Activated naive CD4-positive, alpha-beta T cell treated with anti-CD3 and anti-CD28 coated beads for 36 hours (primary cell): ENCODE measurements at regions of chr2 and their contacts with region 1.

Region 1: DNA sequence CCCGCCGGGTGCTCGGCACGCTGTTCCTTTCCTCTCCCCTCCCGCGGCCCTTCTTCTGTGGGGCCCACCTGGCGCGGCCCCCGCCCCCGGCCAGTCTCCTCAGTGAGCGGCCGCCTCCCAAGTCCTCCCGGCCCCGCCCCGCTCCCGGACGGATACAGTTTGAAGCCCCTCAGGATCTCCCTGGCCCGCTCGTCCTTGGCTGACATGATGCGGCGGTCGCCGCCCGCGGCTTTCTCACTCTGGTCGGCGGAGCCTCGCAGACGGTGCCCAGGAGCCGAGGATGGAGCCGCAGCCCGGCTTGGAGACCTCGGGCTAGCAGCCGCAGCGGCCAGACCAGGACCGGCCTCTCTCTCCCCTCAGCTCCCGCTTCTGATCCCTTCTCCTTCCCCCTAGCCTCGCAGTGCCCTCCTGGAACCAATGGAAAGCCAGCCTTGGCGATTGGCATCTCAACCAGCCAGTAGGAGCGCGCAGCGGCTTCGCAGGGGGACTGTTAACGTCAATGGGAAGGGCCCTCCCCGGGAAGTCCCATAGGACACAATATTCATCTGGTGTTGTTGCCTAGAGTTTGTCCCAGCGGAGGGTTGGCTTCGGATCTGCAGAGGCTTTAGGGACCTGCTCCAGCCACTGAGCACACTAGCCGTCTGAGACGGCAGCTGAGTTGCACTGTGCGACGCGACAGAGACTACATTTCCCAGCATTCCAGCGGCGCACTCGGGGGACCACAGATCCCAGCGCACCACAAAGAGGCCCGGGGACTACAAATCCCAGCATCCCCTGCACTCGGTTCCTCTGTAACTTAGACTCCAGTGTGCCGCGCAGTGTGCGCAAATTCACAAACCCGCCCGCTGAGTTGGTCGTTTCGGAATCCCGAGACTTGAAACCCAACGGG is at the start of gene PDE6D:
- DNase-seq: peak; percentile 98
- H3K4me3 Mint-ChIP-seq: peak within 1 kb of the TSS; percentile 92
- H3K27ac Mint-ChIP-seq: peak within 1 kb of the TSS; percentile 96
- H3K4me1 Mint-ChIP-seq: peaks cover 47% of the 10 kb centered on the region
- H3K27me3 Mint-ChIP-seq: no peaks in the 10 kb centered on the region
- total RNA-seq, gene PDE6D: 25.6 to 27.1 TPM

Region 2: GRCh38 chr2:230925879-230926765 is 855.0 kb before region 1 on chr2:
- CTCF ChIA-PET with region 1: no interaction called
- intact Hi-C with region 1: no loop called
- DNase-seq: peak; percentile 84
- H3K4me3 Mint-ChIP-seq: no peak overlapping the region
- H3K27ac Mint-ChIP-seq: peak overlapping the region; percentile 91
- H3K4me1 Mint-ChIP-seq: peaks cover 50% of the 10 kb centered on the region
- H3K27me3 Mint-ChIP-seq: peaks cover 2% of the 10 kb centered on the region

Region 3: GRCh38 chr2:231056453-231057424 is 724.4 kb before region 1 on chr2 and contains the start of gene PSMD1:
- CTCF ChIA-PET with region 1: no interaction called
- intact Hi-C with region 1: loop called (anchors 1 kb)
- DNase-seq: peak; percentile 96
- H3K4me3 Mint-ChIP-seq: peak within 1 kb of the TSS; percentile 97
- H3K27ac Mint-ChIP-seq: peak within 1 kb of the TSS; percentile 100
- H3K4me1 Mint-ChIP-seq: peaks cover 46% of the 10 kb centered on the region
- H3K27me3 Mint-ChIP-seq: peaks cover 2% of the 10 kb centered on the region
- total RNA-seq, gene PSMD1: 106 TPM

Region 4: GRCh38 chr2:231612179-231613053 is 168.7 kb before region 1 on chr2:
- CTCF ChIA-PET with region 1: interaction called, 9 read pairs
- intact Hi-C with region 1: loop called (anchors 1 kb)
- DNase-seq: peak; percentile 99
- H3K4me3 Mint-ChIP-seq: peak overlapping the region; percentile 81
- H3K27ac Mint-ChIP-seq: peak overlapping the region; percentile 98
- H3K4me1 Mint-ChIP-seq: peaks cover 46% of the 10 kb centered on the region
- H3K27me3 Mint-ChIP-seq: no peaks in the 10 kb centered on the region

Region 5: GRCh38 chr2:231706731-231707624 is 74.2 kb before region 1 on chr2:
- CTCF ChIA-PET with region 1: interaction called, 3 read pairs
- intact Hi-C with region 1: loop called (anchors 1 kb)
- DNase-seq: peak; percentile 98
- H3K4me3 Mint-ChIP-seq: peak overlapping the region; percentile 91
- H3K27ac Mint-ChIP-seq: peak overlapping the region; percentile 100
- H3K4me1 Mint-ChIP-seq: peaks cover 18% of the 10 kb centered on the region
- H3K27me3 Mint-ChIP-seq: peaks cover 2% of the 10 kb centered on the region

Region 6: DNA sequence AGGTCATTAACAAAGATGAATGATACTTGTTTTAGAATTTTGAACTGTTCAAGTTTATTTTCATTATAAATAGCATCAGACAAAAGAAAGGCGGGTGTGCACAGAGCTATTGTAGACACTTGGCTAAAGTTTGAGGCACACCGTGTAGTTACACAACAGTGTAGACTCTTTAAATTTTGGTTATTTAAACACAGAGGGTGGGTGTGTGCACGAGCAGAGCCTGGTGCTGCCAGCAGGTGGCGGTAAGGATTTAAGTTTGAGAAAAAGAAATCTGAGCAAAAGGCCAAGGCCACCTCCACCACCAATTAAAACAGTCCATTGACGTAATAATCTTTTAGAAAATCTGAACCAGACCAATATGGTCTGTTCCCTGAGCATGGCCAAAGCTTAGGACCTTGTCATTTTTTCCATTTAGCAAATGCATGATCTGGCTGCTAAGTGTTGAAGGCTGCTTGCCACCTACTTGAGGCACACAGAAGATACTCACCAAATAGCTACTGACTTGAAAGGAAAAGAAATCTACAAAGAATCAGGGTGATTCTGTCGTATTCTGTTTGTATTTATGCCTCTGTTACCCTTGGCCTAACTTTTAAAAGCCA is 19.4 kb after region 1 on chr2:
- CTCF ChIA-PET with region 1: interaction called, 11 read pairs
- intact Hi-C with region 1: no loop called
- DNase-seq: peak; percentile 71
- H3K4me3 Mint-ChIP-seq: no peak overlapping the region
- H3K27ac Mint-ChIP-seq: no peak overlapping the region
- H3K4me1 Mint-ChIP-seq: peaks cover 5% of the 10 kb centered on the region
- H3K27me3 Mint-ChIP-seq: no peaks in the 10 kb centered on the region

Region 7: DNA sequence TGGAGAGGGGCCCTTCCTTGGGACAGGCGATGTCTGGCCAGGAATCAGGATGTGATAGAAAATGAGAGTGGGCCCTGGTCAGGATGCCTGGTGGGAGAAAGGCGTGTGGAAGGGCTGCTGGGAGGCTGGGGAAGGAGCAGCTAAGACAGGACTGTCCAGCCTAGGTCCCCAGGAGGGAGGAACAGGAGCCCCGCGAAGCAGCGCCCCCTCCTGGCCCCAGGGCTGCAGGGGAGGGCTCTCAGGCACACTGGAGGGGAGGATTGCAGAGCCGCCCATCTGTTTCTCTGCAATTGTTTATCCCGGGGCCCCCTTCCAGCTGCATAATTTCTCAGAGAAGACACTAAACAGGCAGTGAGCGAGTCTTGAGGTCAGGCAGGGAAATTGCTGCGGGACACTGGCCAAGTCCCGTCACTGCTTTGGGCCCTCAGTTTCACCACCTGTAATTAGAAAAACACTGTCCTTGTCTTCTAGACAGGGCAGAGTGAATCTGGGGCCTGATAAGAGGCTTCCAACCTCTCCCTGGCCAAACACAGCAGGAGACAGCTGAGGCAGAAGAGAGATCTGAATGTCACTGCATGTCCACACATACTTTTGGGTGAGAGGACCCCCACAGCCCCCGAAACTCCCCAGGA is 148.9 kb after region 1 on chr2:
- CTCF ChIA-PET with region 1: no interaction called
- intact Hi-C with region 1: no loop called
- DNase-seq: peak; percentile 28
- H3K4me3 Mint-ChIP-seq: no peak overlapping the region
- H3K27ac Mint-ChIP-seq: no peak overlapping the region
- H3K4me1 Mint-ChIP-seq: peaks cover 6% of the 10 kb centered on the region
- H3K27me3 Mint-ChIP-seq: peaks cover 26% of the 10 kb centered on the region

Region 8: GRCh38 chr2:232550354-232551249 is 769.4 kb after region 1 on chr2 and contains the starts of genes EIF4E2 and TIGD1:
- CTCF ChIA-PET with region 1: no interaction called
- intact Hi-C with region 1: loop called (anchors 1 kb)
- DNase-seq: peak; percentile 95
- H3K4me3 Mint-ChIP-seq: peak within 1 kb of the TSS; percentile 99
- H3K27ac Mint-ChIP-seq: peak within 1 kb of the TSS; percentile 98
- H3K4me1 Mint-ChIP-seq: peaks cover 66% of the 10 kb centered on the region
- H3K27me3 Mint-ChIP-seq: no peaks in the 10 kb centered on the region
- total RNA-seq, gene EIF4E2: 46.6 to 54.1 TPM
- total RNA-seq, gene TIGD1: 7.7 to 8.3 TPM